ENCODE measurements at regions of chr3 and their contacts with region 1.

Region 1: GRCh38 chr3:87167628-87168456 is 59.3 kb upstream of the CHMP2B start:
- DNase-seq: peak; percentile 83
- H3K4me3 Mint-ChIP-seq: peak overlapping the region; percentile 30
- H3K27ac Mint-ChIP-seq: no peak overlapping the region
- H3K4me1 Mint-ChIP-seq: peaks cover 2% of the 10 kb centered on the region
- H3K27me3 Mint-ChIP-seq: peaks cover 5% of the 10 kb centered on the region

Region 2: DNA sequence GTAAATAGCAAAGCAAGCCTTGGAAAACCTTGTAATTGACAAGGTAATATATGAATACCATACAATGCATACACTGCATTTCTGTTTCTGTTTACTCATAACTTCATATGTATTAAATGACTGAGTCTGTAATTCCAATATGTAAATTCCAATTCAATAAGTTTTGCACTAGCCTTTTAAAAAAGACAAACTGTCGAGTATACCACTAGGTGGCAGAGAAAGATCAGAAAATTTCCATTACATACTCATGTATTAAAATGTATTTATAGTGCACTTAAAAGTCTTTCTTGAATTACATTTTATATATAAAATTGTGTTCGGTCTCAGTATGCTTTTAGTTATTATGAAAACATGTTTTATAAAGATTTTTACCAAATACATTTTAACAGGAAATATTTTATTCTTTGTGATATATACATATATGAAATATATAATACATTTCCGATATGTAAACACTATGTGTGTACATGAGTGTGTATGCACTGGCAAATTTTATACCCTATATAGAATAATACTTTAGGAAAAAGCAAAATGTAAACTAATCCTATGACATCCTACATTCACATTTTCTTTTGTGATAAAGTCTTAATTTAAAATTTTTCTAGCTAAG is 393.7 kb before region 1 on chr3:
- intact Hi-C with region 1: loop called (anchors 1 kb)
- DNase-seq: no peak
- H3K4me3 Mint-ChIP-seq: no peak overlapping the region
- H3K27ac Mint-ChIP-seq: no peak overlapping the region
- H3K4me1 Mint-ChIP-seq: no peaks in the 10 kb centered on the region
- H3K27me3 Mint-ChIP-seq: no peaks in the 10 kb centered on the region

Region 3: DNA sequence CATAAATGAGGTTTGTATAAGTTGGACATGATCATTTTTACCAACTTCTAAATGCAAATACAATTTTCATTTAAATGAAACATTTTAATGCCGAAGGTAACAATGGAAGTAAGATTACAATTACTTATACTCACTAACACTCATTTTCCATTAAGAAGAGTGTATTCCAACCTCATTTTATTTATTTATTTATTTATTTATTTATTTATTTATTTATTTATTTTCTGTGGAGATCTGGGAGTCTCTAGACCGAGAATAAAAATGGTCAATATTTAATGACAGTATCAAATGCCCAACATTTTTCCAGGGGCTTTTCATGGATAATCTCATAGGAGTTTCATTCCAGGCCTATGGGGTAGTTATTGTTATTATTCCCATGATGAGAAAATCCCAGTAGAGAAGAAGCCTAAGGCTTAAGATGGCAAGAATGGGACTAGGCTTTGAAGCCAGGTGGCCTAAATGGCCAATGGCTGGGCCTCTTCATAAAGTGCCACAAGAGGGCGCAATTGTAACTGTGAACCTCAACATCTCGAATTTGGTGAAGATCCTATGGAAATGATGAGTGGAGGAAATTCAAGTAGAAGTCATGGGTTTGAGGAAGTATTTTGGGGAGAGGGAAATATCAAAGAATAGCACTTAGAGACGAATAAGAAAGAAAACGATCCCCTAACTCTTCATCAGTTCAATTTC is 198.2 kb before region 1 on chr3:
- intact Hi-C with region 1: loop called (anchors 1 kb)
- DNase-seq: peak; percentile 78
- H3K4me3 Mint-ChIP-seq: no peak overlapping the region
- H3K27ac Mint-ChIP-seq: no peak overlapping the region
- H3K4me1 Mint-ChIP-seq: no peaks in the 10 kb centered on the region
- H3K27me3 Mint-ChIP-seq: no peaks in the 10 kb centered on the region